ENCODE measurements at regions of chr7 and their contacts with region 1.

Region 1: DNA sequence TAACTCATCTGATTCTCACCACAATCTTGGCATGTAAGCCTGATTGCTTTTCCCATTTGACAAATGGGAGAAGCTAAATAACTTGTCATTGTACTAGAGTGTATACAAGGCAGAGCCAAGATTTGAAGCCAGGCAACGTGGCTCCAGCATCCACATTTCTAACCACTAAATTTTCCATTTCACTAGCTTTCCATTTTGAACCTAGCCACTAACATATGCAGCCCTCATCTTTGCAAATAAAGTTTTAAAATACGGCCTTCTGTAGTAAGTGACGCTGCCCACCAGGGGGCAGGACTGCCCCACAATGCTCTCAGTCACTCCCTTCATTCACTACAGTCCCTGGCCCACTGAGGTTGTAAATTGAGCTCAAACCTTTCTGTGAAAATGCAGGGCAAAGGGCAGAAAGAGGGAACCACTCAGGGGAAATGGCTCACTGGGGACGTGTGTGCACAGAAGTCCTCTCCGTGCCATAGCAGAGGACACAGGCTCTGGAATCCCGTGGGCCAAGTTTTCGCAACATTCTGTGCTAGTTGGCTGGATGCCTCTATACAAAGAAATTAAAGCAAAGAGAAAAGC is 315.7 kb downstream of the TNS3 start:
- DNase-seq: peak; percentile 75
- H3K4me3 ChIP-seq: no peak overlapping the region
- H3K27ac ChIP-seq: peak overlapping the region; percentile 72 to 84 (median 82)
- H3K4me1 ChIP-seq: peaks cover 0 to 9% (median 5%) of the 10 kb centered on the region in 4 donors
- H3K27me3 ChIP-seq: no peaks in the 10 kb centered on the region
- CTCF ChIP-seq: peak; percentile 89 to 97 (median 92)
- EP300 ChIP-seq: no peak
- POLR2A ChIP-seq: no peak

Region 2: GRCh38 chr7:46900312-46901263 is 365.6 kb before region 1 on chr7:
- in situ Hi-C with region 1: no loop called
- intact Hi-C with region 1: no loop called
- DNase-seq: no peak
- H3K4me3 ChIP-seq: no peak overlapping the region
- H3K27ac ChIP-seq: no peak overlapping the region
- H3K4me1 ChIP-seq: no peaks in the 10 kb centered on the region
- H3K27me3 ChIP-seq: no peaks in the 10 kb centered on the region
- CTCF ChIP-seq: no peak
- EP300 ChIP-seq: no peak
- POLR2A ChIP-seq: no peak

Region 3: GRCh38 chr7:47293884-47294555 is 27.8 kb after region 1 on chr7:
- in situ Hi-C with region 1: no loop called
- intact Hi-C with region 1: no loop called
- DNase-seq: peak; percentile 27
- H3K4me3 ChIP-seq: no peak overlapping the region
- H3K27ac ChIP-seq: peak overlapping the region; percentile 58 to 75 (median 70)
- H3K4me1 ChIP-seq: peaks cover 6 to 31% (median 14%) of the 10 kb centered on the region in 4 donors
- H3K27me3 ChIP-seq: no peaks in the 10 kb centered on the region
- CTCF ChIP-seq: no peak
- EP300 ChIP-seq: no peak
- POLR2A ChIP-seq: no peak

Region 4: GRCh38 chr7:47435889-47436312 is 169.7 kb after region 1 on chr7:
- in situ Hi-C with region 1: loop called in 2 of 4 experiments (anchors 10 to 25 kb)
- intact Hi-C with region 1: no loop called
- DNase-seq: peak; percentile 80
- H3K4me3 ChIP-seq: no peak overlapping the region
- H3K27ac ChIP-seq: no peak overlapping the region
- H3K4me1 ChIP-seq: no peaks in the 10 kb centered on the region
- H3K27me3 ChIP-seq: no peaks in the 10 kb centered on the region
- CTCF ChIP-seq: peak; percentile 71 to 82 (median 76)
- EP300 ChIP-seq: no peak
- POLR2A ChIP-seq: no peak

Region 5: GRCh38 chr7:47827351-47827756 is 561.1 kb after region 1 on chr7:
- in situ Hi-C with region 1: loop called in 2 of 4 experiments (anchors 10 kb)
- intact Hi-C with region 1: no loop called
- DNase-seq: no peak
- H3K4me3 ChIP-seq: no peak overlapping the region
- H3K27ac ChIP-seq: no peak overlapping the region
- H3K4me1 ChIP-seq: no peaks in the 10 kb centered on the region
- H3K27me3 ChIP-seq: no peaks in the 10 kb centered on the region
- CTCF ChIP-seq: no peak
- EP300 ChIP-seq: no peak
- POLR2A ChIP-seq: no peak

Region 6: DNA sequence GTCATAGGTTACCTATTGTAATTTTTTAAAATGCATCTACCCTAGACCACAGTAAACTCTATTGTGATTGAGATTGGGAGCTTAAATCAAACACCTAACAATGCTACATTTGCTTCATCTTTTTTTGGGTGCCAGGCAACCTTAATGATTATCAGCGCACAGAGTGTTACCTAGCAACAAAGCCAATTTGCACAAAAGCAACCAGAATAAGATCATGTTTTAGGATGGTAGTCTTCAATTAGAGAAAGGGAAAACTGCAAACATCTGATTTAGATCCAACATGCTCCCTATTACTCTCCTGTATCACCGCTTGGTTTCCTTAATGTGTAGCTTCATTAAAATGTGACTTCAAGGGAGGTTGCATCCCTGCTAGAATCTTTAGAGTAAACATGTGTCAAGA is 1132.0 kb after region 1 on chr7:
- in situ Hi-C with region 1: no loop called
- intact Hi-C with region 1: loop called (anchors 5 kb)
- DNase-seq: no peak
- H3K4me3 ChIP-seq: no peak overlapping the region
- H3K27ac ChIP-seq: no peak overlapping the region
- H3K4me1 ChIP-seq: no peaks in the 10 kb centered on the region
- H3K27me3 ChIP-seq: no peaks in the 10 kb centered on the region
- CTCF ChIP-seq: no peak
- EP300 ChIP-seq: no peak
- POLR2A ChIP-seq: no peak

Measured in transverse colon (tissue), 4 donors.